AG04449 (cell line): ENCODE measurements at regions of chr16 and their contacts with region 1.

Region 1: GRCh38 chr16:2340564-2341455 is at the start of gene ABCA3:
- DNase-seq: peak; percentile 41
- H3K4me3 ChIP-seq: peak within 1 kb of the TSS; percentile 56
- CTCF ChIP-seq: peak; percentile 96

Region 2: DNA sequence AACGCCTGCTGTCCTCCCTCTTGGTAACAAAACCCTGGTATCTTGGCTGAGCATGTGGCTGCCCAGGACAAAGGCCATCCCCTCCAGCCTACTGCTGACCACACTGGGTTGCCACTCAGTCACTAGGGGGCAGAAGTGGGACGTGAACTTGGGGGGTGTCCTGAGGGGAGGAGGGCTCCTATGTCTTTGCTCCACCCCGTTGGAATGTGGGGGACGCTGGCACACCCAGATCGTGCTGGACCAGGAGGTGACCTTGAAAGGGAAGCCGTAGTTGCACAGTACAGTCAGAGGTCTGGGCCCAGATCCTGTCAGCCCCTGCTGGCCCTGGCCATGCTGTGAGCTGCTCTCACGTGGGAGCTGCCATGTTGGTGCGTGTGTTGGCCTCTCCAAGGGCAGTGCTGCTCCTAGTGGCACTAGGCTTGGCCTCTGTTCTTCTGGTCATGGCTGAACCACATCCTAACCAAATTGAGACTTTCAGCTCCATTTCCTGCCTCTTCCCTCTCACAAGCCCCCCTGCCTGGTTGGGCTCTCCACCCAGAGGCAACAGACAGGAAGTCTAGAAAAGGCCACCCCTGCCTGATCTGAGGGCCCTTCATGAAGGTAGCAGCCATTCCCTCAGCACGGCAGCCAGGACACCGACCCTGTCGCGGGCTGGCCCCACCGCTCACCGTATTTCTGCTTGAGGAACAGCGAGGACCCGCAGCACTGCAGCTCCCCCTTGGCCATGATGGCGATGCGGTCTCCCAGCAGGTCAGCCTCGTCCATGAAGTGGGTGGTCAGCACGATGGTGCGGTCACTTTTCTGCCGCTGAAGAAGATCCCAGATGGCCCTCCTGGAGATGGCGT is 43.9 kb before region 1 on chr16:
- CTCF ChIA-PET with region 1: no interaction called
- POLR2A ChIA-PET with region 1: no interaction called
- DNase-seq: no peak
- H3K4me3 ChIP-seq: no peak overlapping the region
- CTCF ChIP-seq: peak; percentile 50

Region 3: DNA sequence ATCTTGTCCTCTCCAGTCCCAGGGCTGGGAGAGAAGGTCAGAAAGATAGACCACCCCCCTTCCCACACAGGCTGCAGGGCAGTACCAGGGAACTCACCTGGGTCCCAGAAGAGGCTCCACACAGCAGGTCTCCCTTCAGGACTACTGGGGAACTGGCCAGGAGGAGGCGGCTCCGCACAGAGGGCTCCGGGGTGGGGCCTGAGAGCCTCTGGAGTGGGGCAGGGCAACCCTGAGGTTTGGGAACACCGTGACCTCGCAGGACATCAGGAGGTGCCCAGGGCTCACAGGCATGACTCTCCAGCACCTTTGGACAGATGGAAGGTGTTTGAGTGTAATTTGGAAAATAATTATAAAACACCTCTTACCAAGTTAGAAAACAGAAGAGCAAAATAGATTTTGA is 11.3 kb before region 1 on chr16:
- CTCF ChIA-PET with region 1: interaction called, 10 read pairs
- POLR2A ChIA-PET with region 1: no interaction called
- DNase-seq: no peak
- H3K4me3 ChIP-seq: no peak overlapping the region
- CTCF ChIP-seq: no peak

Region 4: GRCh38 chr16:2357331-2357730 is 16.5 kb after region 1 on chr16:
- CTCF ChIA-PET with region 1: interaction called, 12 read pairs
- POLR2A ChIA-PET with region 1: no interaction called
- DNase-seq: no peak
- H3K4me3 ChIP-seq: no peak overlapping the region
- CTCF ChIP-seq: no peak

Region 5: DNA sequence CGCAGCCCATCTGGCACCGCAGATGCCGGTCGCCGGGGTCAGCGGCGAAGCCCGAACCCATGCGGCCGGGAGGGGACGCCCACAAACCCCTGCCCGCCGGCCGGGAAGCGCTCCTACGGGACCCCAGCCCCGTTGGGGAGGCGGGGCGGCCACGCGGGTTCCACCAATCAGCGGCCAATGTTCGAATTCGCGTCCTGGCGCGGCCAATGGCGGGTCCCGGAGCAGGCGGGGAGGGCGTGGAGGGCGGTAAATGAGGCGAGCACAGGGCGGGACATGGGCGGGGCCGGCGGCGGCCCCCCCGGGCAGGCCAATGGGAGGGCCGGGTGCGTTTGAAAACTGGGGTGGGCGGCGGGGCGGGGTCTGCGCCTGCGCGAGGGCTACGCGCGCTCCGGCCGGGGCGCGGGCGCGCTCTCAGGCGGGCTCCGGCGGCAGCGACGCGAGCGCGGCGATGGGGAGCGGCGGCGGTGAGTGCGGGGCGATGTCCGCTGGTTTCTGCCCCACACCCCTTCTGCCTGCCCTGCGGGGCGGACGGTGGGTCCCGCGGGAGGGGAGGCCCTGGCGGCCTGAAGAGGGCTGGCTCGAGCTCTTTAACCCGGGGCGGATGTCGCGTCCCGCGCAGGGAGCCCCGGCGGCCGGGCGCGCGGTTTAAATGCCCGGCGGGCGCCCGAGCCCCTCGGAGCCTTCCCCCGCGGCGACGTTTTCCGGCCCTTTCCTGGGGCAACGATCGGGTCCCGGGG is 88.4 kb after region 1 on chr16 and contains the start of gene CCNF:
- CTCF ChIA-PET with region 1: interaction called, 14 read pairs
- POLR2A ChIA-PET with region 1: no interaction called
- DNase-seq: peak; percentile 40
- H3K4me3 ChIP-seq: peak within 1 kb of the TSS; percentile 81
- CTCF ChIP-seq: peak; percentile 3